ENCODE measurements at regions of chr4 and their contacts with region 1.

Region 1: GRCh38 chr4:36351082-36351666 is 69.8 kb downstream of the DTHD1 start:
- DNase-seq: peak; percentile 54
- ATAC-seq: peak in 1 of 2 donors; percentile 77

Region 2: DNA sequence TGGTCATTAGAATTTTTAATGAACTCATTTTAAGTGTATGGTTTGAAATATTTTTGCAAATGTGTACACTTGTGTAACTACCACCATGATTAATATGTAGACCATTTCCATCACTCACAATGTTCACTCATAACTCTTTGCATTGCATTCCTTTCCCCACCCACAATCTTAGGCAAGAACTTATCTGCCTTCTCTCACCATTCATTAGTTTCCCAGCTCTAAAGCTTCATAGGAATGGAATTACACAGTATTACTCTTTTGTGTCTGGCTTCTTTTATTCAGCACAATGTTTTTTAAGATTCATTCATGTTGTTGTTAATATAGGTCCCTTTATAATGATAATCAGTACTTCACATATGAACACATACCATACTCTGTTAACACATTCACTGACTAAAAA is 213.0 kb before region 1 on chr4:
- intact Hi-C with region 1: no loop called
- DNase-seq: no peak
- ATAC-seq: peak in 1 of 2 donors; percentile 75

Region 3: DNA sequence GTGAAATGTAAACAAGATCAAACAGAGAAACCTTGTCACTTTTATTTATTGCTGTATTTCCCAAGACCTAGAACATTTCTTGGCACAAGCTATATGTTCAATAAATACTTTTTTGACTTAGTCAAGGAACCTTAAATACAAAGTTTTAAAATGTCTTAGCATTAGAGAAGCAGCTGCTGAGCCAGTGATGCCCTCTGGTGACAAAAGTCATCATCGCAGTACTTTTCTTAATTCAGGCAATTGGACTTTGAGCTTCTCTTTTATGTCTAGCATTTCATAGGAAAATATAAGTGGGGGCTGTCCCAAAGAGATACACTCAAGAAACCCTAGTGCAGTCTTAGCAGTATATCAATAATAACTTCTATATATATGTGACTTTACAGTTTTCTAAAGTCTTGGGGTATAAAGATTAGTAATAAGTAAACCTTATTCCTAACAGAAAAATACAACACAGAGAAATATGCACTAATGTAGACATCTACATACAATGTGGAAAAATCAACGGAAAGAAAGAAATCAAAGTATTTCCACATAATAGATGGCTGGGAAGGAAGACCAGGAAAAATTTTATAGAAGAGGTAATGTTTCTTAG is 48.7 kb after region 1 on chr4:
- intact Hi-C with region 1: loop called in 1 of 2 experiments (anchors 2 kb)
- DNase-seq: no peak
- ATAC-seq: no peak

Region 4: DNA sequence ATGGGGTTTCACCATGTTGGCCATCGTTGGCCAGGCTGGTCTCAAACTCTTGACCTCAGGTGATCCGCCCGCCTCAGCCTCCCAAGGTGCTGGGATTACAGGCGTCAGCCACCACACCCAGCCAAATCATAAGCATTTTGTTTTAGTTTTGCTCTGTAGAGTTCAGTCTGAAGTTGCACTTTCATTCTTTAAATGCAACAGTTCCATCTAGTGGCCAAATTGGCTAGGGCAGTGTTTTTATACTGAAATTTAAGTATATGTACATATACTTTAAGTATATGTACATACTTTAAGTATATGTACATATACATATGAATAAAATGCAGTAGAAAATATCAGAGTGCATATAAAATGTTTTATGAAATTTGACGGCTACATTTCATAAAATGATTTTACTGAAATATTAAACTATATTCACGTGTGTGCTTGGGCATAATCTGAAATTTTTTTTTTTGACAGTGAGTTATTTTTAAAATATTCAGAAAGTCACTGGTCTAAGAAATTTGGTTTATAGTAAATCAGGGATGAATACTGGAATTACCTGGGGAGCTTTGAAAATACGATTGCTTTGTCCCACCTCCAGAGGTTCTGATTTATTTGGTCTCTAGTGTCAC is 1038.9 kb after region 1 on chr4:
- intact Hi-C with region 1: loop called (anchors 5 to 10 kb)
- DNase-seq: no peak
- ATAC-seq: peak in 1 of 2 donors; percentile 65

Region 5: DNA sequence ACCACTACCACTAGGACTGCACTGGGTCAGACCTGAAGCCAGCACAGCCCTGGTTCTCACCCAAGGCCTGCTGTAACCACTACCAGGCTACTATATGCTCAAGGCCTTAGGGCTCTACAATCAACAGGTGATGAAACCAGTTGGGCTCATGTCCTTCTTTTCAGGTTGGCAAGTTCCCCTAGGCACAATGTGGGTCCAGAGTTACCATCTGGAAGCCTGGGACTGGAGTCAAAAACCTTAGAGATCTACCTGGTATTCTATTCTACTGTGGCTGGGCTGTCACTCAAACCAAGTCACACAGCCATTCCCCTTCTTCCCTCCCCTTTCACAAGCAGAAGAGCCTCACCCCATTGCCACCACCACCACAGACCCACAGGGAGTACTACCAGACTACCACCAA is 1159.5 kb after region 1 on chr4:
- intact Hi-C with region 1: no loop called
- DNase-seq: no peak
- ATAC-seq: no peak

Measured in left cardiac atrium (tissue), 4 donors.